ENCODE measurements at regions of chr14 and their contacts with region 1.

Region 1: DNA sequence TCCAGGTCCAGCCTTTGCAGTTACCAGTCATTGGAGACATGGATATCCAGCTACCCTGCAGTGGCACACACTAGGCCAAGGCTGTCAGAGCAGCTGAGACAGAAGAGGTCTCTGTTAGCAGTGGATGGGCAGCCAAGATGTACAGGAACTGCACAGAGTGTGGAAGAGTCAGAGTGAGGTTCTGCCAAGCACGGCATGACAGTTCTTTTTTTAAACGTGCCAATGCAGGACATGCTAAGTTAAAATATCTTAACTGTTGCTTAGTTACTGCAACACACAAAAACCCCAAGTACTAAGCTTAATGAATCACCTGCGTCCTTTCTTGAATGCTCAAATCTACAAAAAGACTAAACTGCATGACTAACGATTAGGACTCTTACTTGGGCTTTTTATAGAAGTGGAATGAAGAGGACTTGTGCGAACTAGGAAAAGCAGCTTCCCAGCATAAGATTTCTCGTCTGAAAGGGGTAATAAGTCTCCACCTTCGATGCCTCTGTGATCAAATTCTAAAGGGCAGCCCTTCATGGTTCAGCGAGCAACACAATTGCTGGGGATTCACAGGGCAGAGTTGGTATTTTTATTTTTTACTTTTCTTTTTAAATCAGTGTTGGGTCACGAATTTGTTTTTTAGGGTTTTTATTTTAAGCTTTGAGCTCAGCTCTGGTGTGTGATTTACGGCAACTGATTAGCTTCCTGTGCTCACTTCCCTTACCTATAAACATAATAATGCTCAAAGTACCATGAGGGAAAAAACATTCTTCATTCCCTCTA is 20.6 kb downstream of the MAPK1IP1L start:
- DNase-seq: peak; percentile 47
- ATAC-seq: peak; percentile 77
- H3K4me3 Mint-ChIP-seq: peak overlapping the region; percentile 79
- H3K27ac Mint-ChIP-seq: peak overlapping the region; percentile 98
- H3K4me1 Mint-ChIP-seq: peaks cover 75% of the 10 kb centered on the region
- H3K27me3 Mint-ChIP-seq: no peaks in the 10 kb centered on the region
- CTCF ChIP-seq: no peak

Region 2: GRCh38 chr14:55026793-55027561 is 45.1 kb before region 1 on chr14 and contains the starts of genes SOCS4 and WDHD1:
- CTCF ChIA-PET with region 1: no interaction called
- POLR2A ChIA-PET with region 1: interaction called, 13 read pairs
- intact Hi-C with region 1: loop called (anchors 1 kb)
- DNase-seq: peak; percentile 99
- ATAC-seq: peak; percentile 92
- H3K4me3 Mint-ChIP-seq: peak within 1 kb of the TSS; percentile 95
- H3K27ac Mint-ChIP-seq: peak within 1 kb of the TSS; percentile 92
- H3K4me1 Mint-ChIP-seq: peaks cover 50% of the 10 kb centered on the region
- H3K27me3 Mint-ChIP-seq: no peaks in the 10 kb centered on the region
- CTCF ChIP-seq: no peak
- total RNA-seq, gene SOCS4: 29.2 and 30.3 TPM in 2 replicates
- total RNA-seq, gene WDHD1: 9.3 and 9.5 TPM in 2 replicates

Region 3: DNA sequence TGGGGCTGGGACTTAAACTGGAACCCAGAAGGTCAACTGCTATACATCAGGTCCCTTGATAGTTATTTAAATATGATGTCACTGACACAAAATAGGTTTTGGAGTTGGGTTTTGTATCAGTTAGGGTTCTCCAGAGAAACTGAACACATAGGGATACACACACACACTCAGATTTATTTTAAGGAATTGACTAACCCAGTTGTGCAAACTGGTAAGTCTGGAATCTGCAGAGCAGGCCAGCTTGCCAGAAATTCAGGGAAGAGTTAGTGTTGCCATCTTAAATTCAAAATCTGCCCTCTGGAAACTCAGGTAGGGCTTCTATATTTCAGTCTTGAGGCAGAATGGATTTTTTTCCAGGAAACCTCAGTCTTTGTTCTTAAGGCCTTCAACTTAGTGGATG is 16.3 kb after region 1 on chr14:
- CTCF ChIA-PET with region 1: interaction called, 7 read pairs
- POLR2A ChIA-PET with region 1: interaction called, 13 read pairs
- intact Hi-C with region 1: loop called (anchors 1 kb)
- DNase-seq: no peak
- ATAC-seq: no peak
- H3K4me3 Mint-ChIP-seq: no peak overlapping the region
- H3K27ac Mint-ChIP-seq: no peak overlapping the region
- H3K4me1 Mint-ChIP-seq: peaks cover 9% of the 10 kb centered on the region
- H3K27me3 Mint-ChIP-seq: no peaks in the 10 kb centered on the region
- CTCF ChIP-seq: no peak

Region 4: DNA sequence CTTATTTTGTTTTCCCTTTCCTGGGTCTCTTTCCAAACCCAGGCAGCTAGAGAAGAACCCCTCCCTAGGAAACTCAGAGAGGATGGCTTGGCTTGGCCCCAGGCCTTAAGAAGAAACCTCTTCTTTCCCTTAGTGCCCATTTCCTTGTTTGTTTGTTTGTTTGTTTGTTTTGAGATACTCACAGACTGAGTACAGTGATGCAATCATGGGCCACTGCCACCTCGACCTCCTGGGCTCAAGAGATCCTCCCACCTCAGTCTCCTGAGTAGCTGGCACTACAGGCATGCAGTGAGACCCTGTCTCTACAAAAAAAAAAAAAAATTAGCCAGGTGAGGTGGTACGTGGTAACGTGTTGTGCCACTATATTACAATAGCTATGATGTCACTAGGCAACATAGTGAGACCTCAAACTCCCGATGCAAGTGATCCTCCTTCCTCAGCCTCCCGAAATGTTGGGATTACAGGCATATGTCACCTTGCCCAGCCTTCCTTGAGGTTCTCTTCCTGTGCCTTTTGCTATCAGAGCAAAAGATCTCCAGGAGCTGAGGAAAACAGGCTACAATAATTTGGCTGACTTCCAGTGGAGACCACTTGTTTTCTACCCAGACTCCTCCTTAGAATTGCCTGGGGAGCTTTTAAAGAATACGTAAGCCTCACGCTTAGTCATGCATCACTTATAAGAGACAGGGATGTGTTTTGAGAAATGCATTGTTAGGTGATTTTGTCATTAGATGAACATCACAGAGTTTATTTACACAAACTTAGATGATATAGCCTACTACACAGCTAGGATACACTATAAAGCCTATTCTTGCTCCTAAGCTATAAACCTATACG is 22.5 kb after region 1 on chr14:
- CTCF ChIA-PET with region 1: interaction called, 5 read pairs
- POLR2A ChIA-PET with region 1: interaction called, 11 read pairs
- intact Hi-C with region 1: loop called (anchors 1 kb)
- DNase-seq: no peak
- ATAC-seq: no peak
- H3K4me3 Mint-ChIP-seq: no peak overlapping the region
- H3K27ac Mint-ChIP-seq: no peak overlapping the region
- H3K4me1 Mint-ChIP-seq: peaks cover 28% of the 10 kb centered on the region
- H3K27me3 Mint-ChIP-seq: no peaks in the 10 kb centered on the region
- CTCF ChIP-seq: no peak

Region 5: DNA sequence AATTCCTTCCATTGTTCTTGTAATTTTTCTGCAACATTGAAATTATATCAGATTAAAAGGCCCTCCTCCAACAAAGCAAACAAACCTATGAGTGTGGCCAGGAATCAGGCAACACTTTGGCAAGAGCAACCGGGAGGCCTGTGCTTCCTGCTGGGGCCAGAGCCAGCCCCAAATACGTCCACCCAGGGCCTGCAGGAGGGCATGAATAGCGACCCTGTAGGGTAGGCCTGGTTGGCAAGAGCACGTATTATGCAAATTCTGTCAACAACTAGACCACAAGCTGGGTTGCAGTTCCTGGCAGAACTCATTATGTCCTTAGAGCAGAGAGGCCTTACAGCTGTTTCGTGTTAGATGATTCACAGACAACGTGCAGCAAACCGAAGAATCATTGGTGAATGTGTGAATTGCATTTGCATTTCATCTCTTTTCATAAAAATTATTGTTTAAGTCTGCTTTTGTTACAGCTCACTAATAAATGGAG is 30.1 kb after region 1 on chr14:
- CTCF ChIA-PET with region 1: interaction called, 4 read pairs
- POLR2A ChIA-PET with region 1: interaction called, 15 read pairs
- intact Hi-C with region 1: loop called (anchors 1 kb)
- DNase-seq: peak; percentile 37
- ATAC-seq: peak; percentile 77
- H3K4me3 Mint-ChIP-seq: peak overlapping the region; percentile 61
- H3K27ac Mint-ChIP-seq: peak overlapping the region; percentile 87
- H3K4me1 Mint-ChIP-seq: peaks cover 55% of the 10 kb centered on the region
- H3K27me3 Mint-ChIP-seq: no peaks in the 10 kb centered on the region
- CTCF ChIP-seq: no peak

Region 6: GRCh38 chr14:55160989-55161388 is 88.9 kb after region 1 on chr14:
- CTCF ChIA-PET with region 1: interaction called, 15 read pairs
- POLR2A ChIA-PET with region 1: interaction called, 12 read pairs
- intact Hi-C with region 1: no loop called
- DNase-seq: no peak
- ATAC-seq: peak; percentile 75
- H3K4me3 Mint-ChIP-seq: no peak overlapping the region
- H3K27ac Mint-ChIP-seq: no peak overlapping the region
- H3K4me1 Mint-ChIP-seq: peaks cover 2% of the 10 kb centered on the region
- H3K27me3 Mint-ChIP-seq: no peaks in the 10 kb centered on the region
- CTCF ChIP-seq: no peak

Measured in activated B cell treated with CpG ODN at 0.5 μM for 24 hours (primary cell).